HepG2 (cell line): ENCODE measurements at regions of chr14 and their contacts with region 1.

Region 1: DNA sequence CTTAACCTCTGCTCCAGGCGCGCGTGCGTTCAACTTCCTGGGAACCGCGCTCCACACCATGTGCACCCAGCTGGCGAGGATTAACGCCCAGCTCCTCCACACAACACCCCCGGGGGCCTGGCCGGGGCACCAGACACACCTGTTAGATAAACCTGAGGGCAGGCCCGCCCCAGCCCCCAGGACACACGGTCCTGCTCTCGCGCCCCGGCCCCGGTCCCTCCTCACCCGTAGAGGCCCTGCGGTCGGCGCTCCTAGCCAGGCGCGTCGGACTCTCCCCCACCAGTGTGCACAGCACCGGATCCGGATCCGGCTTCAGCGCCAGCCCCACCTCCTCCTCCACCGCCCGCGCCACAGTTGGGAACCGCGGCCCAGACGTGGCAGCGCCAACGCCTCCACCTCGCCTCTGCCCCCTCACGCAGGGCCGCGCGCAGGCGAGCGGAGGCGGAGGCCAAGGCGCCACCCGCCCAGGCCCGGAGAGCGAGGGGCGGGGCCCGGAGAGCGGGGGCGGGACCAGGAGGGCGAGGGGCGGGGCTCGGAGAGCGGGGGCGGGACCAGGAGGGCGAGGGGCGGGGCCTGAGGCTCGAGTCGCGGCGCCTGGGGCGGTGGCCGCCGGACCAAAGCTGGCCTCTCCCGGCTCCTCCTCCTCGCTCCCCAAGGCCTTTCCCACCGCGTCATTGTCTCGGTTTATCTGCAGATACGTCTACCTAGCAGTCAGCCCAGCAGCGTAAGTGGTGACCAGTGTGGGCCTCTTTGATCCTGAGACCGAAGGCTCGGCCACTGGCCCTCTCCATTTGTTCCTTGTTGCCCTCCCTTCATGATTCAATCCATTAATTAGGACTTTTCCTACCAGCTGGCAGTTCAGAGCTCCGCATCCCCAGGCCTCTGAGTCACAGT is at the start of gene GNPNAT1:
- DNase-seq: peak; percentile 88
- ATAC-seq: peak; percentile 95
- H3K4me3 ChIP-seq: peak within 1 kb of the TSS; percentile 65 to 90 (median 88)
- H3K27ac ChIP-seq: peak within 1 kb of the TSS; percentile 90
- H3K4me1 ChIP-seq: peaks cover 49% of the 10 kb centered on the region
- H3K27me3 ChIP-seq: no peaks in the 10 kb centered on the region; a peak in 2 of 5 replicates
- CTCF ChIP-seq: peak; percentile 18; the same call in 1 of the 2 replicates
- EP300 ChIP-seq: 0 out of 4 replicates have a peak, but pooled peaks of 1 of the 2 experiments have one; percentile 6
- POLR2A ChIP-seq: peak; percentile 87 to 89
- RAD21 ChIP-seq: peak; percentile 32; the same call in 1 of the 2 replicates
- total RNA-seq, gene GNPNAT1: 54.9 and 89.6 TPM in 2 replicates

Region 2: DNA sequence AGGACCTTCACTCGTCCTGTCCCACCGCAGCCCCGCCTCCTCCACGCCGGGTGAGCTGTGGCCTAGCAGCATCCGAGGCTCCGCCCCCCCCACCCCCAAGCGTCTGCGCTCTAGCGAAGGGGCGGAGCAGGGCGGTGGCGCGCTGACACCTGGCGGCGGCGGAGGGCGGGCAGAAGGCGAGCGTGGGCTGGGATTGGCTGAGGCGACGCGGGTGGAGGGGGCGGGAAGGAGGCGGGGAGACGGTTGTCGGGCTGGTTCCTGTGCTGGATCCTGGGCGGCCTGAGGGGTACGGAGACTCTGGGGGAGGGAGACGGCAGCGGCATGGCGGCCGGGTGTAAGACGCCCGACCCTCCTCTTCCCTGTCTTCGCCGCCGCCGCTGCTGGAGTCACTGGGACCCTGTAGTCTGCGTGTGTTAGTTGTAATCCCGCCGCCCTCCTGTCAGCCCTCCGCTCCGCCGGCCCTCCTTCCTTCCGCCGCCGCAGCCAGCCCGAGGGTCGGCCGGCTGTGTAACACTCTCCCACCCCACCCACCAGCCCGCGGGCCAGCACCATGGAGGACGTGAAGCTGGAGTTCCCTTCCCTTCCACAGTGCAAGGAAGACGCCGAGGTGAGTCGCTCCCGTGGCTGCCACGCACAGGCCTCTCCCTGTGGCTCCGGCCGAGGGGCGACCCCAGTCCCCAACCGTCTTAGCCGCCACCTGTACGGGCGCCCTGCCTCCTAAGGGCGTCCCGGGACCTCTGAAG is 61.4 kb before region 1 on chr14 and contains the start of gene STYX:
- CTCF ChIA-PET with region 1: no interaction called
- POLR2A ChIA-PET with region 1: interaction called, 3 read pairs
- in situ Hi-C with region 1: no loop called
- intact Hi-C with region 1: loop called (anchors 2 kb)
- DNase-seq: peak; percentile 95
- ATAC-seq: peak; percentile 98
- H3K4me3 ChIP-seq: peak within 1 kb of the TSS; percentile 90 to 99 (median 90)
- H3K27ac ChIP-seq: peak within 1 kb of the TSS; percentile 63
- H3K4me1 ChIP-seq: peaks cover 29% of the 10 kb centered on the region
- H3K27me3 ChIP-seq: no peaks in the 10 kb centered on the region; a peak in 1 of 5 replicates
- CTCF ChIP-seq: peak; percentile 32; the same call in 1 of the 2 replicates
- EP300 ChIP-seq: no peak
- POLR2A ChIP-seq: peak; percentile 89 to 98
- RAD21 ChIP-seq: no peak
- total RNA-seq, gene STYX: 10.9 and 15.6 TPM in 2 replicates

Region 3: GRCh38 chr14:52755607-52756253 is 35.7 kb before region 1 on chr14:
- CTCF ChIA-PET with region 1: no interaction called
- POLR2A ChIA-PET with region 1: interaction called, 27 read pairs
- in situ Hi-C with region 1: no loop called
- intact Hi-C with region 1: no loop called
- DNase-seq: peak; percentile 95
- ATAC-seq: peak; percentile 99
- H3K4me3 ChIP-seq: peak overlapping the region in 2 of 3 experiments; percentile 22 to 24; a peak in 2 of 6 replicates
- H3K27ac ChIP-seq: peak overlapping the region; percentile 78
- H3K4me1 ChIP-seq: peaks cover 38% of the 10 kb centered on the region
- H3K27me3 ChIP-seq: no peaks in the 10 kb centered on the region
- CTCF ChIP-seq: no peak
- EP300 ChIP-seq: peak in 1 of 2 experiments; percentile 76; a peak in 2 of 4 replicates
- POLR2A ChIP-seq: no peak
- RAD21 ChIP-seq: no peak

Region 4: GRCh38 chr14:52808101-52808500 is 16.7 kb after region 1 on chr14:
- CTCF ChIA-PET with region 1: no interaction called
- POLR2A ChIA-PET with region 1: interaction called, 10 read pairs
- in situ Hi-C with region 1: no loop called
- intact Hi-C with region 1: no loop called
- DNase-seq: peak; percentile 78
- ATAC-seq: peak; percentile 73
- H3K4me3 ChIP-seq: no peak overlapping the region
- H3K27ac ChIP-seq: peak overlapping the region; percentile 28
- H3K4me1 ChIP-seq: peaks cover 20% of the 10 kb centered on the region
- H3K27me3 ChIP-seq: no peaks in the 10 kb centered on the region
- CTCF ChIP-seq: no peak
- EP300 ChIP-seq: peak in 1 of 2 experiments; percentile 55; a peak in 1 of 4 replicates
- POLR2A ChIP-seq: no peak
- RAD21 ChIP-seq: no peak

Region 5: GRCh38 chr14:52824507-52824906 is 33.1 kb after region 1 on chr14:
- CTCF ChIA-PET with region 1: no interaction called
- POLR2A ChIA-PET with region 1: interaction called, 3 read pairs
- in situ Hi-C with region 1: no loop called
- intact Hi-C with region 1: loop called (anchors 1 kb)
- DNase-seq: no peak
- ATAC-seq: no peak
- H3K4me3 ChIP-seq: no peak overlapping the region
- H3K27ac ChIP-seq: no peak overlapping the region
- H3K4me1 ChIP-seq: peaks cover 68% of the 10 kb centered on the region
- H3K27me3 ChIP-seq: no peaks in the 10 kb centered on the region
- CTCF ChIP-seq: no peak
- EP300 ChIP-seq: no peak
- POLR2A ChIP-seq: no peak
- RAD21 ChIP-seq: no peak